Ascending aorta (tissue), 2 donors: ENCODE measurements at regions of chr5 and their contacts with region 1.

Region 1: GRCh38 chr5:1523771-1524480 is at the start of gene LPCAT1:
- DNase-seq: peak; percentile 8 to 86
- H3K4me3 ChIP-seq: peak within 1 kb of the TSS; percentile 82 to 88
- H3K27ac ChIP-seq: peak within 1 kb of the TSS; percentile 89 to 91
- H3K4me1 ChIP-seq: peaks cover 0 to 16% of the 10 kb centered on the region in 2 donors
- H3K27me3 ChIP-seq: no peaks in the 10 kb centered on the region
- CTCF ChIP-seq: peak in 1 of 3 experiments; percentile 18
- total RNA-seq, gene LPCAT1: 86.2 TPM

Region 2: DNA sequence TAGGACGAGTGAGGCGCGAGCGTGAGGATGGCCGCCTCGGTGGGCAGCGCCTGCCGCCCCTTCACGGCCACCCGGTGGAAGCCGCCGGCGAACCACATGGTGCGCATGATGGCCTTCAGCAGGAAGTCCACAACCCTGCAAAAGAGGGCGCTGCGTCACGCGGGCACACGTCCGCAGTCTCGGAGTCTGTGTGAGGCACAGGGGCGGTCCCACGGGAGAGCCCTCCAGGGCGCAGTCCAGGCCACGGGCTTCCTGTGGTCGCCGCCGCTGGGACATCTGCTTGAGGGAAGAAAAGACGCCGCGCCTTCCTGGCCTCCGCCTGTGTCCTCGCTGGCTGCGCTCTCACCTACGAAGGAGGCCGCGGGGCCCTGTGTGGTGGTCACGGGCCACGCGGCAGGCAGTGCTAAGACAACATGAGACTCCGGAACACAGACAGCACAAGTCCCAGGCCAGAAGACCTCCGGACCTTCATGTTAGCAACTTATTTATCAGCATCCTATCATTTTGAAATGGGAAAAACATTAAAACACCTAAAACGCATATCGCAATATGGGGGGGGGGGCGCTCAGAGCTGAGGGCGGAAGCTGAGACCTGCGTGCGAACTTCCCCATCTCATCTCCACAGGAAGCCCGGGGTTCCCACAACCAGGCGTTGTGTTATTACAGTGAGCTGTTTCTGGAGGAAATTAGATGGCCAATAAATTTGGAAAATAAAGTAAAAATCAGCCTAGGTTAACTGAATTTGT is 29.0 kb before region 1 on chr5:
- intact Hi-C with region 1: no loop called
- DNase-seq: no peak
- H3K4me3 ChIP-seq: no peak overlapping the region
- H3K27ac ChIP-seq: no peak overlapping the region
- H3K4me1 ChIP-seq: peaks cover 0 to 2% of the 10 kb centered on the region in 2 donors
- H3K27me3 ChIP-seq: no peaks in the 10 kb centered on the region
- CTCF ChIP-seq: no peak

Region 3: DNA sequence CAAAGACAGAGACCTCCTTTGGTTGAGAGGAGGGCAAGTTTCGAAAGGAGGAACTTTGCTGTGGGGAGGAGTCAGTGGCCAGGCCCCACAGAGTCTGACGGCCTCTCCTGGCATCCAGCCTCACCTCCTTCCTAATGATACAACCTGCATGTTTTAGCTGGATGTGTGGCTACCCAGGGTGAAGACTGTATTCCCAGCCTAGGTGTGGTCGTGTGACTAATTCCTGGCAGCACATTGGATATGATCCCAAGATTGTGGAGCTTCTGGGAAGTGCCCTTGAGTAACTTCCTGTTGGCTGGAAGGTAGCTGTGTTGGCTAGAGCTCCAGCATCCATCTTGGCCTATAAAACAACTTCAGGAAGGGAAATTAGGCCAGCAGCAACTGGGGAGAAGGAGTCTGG is 18.8 kb after region 1 on chr5:
- intact Hi-C with region 1: loop called (anchors 2 kb)
- DNase-seq: peak; percentile 33 to 83
- H3K4me3 ChIP-seq: no peak overlapping the region
- H3K27ac ChIP-seq: peak overlapping the region; percentile 73 to 76
- H3K4me1 ChIP-seq: peaks cover 8 to 10% of the 10 kb centered on the region in 2 donors
- H3K27me3 ChIP-seq: no peaks in the 10 kb centered on the region
- CTCF ChIP-seq: no peak

Region 4: DNA sequence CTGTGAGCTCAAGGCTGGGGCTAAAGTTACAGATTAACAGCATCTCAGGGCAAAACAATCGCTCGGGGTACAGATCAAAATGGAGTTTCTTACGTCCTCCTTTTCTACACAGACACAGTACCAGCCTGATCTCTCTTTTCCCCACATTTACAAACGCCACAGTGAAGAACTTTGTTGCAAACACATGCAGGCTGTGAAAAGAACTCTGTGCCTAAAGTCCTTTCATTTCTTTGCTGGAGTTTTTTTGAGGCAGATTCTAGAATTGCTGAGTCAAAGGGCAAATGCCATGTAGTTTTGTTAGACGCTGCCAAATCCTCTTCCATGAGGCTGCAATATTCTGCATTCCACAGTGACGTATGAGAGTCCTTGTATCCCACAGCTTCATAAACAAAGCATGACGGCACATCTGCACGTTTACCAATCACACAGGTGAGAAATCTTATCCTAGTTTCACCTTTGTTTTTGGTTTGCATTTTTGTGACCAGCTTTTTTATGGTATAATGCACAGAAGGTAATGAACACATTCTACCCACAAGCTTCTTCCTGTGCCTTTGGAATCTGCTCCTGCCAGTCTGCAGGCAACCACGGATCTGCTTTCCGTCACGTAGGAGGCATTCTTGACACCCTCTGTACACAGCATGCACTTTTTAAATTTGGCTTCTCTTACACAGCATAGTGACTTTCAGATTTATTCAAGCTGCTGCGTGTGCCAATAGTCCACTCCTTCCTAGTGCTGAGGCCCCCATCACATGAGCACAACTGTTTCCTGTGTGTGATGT is 44.5 kb after region 1 on chr5:
- intact Hi-C with region 1: loop called (anchors 2 kb)
- DNase-seq: no peak
- H3K4me3 ChIP-seq: no peak overlapping the region
- H3K27ac ChIP-seq: peak overlapping the region; percentile 70 to 75
- H3K4me1 ChIP-seq: peaks cover 8 to 25% of the 10 kb centered on the region in 2 donors
- H3K27me3 ChIP-seq: no peaks in the 10 kb centered on the region
- CTCF ChIP-seq: no peak

Region 5: GRCh38 chr5:1594357-1595106 is 70.6 kb after region 1 on chr5:
- intact Hi-C with region 1: loop called (anchors 2 kb)
- DNase-seq: peak in 1 of 2 donors; percentile 81
- H3K4me3 ChIP-seq: peak overlapping the region; percentile 67 to 71
- H3K27ac ChIP-seq: peak overlapping the region; percentile 78 to 82
- H3K4me1 ChIP-seq: peaks cover 0 to 3% of the 10 kb centered on the region in 2 donors
- H3K27me3 ChIP-seq: no peaks in the 10 kb centered on the region
- CTCF ChIP-seq: peak in 2 of 3 experiments; percentile 41 to 48

Region 6: GRCh38 chr5:1633605-1634336 is 109.8 kb after region 1 on chr5:
- intact Hi-C with region 1: loop called (anchors 5 kb)
- DNase-seq: peak; percentile 30 to 86
- H3K4me3 ChIP-seq: peak overlapping the region; percentile 79 to 87
- H3K27ac ChIP-seq: peak overlapping the region; percentile 90
- H3K4me1 ChIP-seq: peaks cover 0 to 5% of the 10 kb centered on the region in 2 donors
- H3K27me3 ChIP-seq: no peaks in the 10 kb centered on the region
- CTCF ChIP-seq: no peak

Region 7: GRCh38 chr5:1718669-1719068 is 194.7 kb after region 1 on chr5:
- intact Hi-C with region 1: no loop called
- DNase-seq: no peak
- H3K4me3 ChIP-seq: no peak overlapping the region
- H3K27ac ChIP-seq: no peak overlapping the region
- H3K4me1 ChIP-seq: no peaks in the 10 kb centered on the region
- H3K27me3 ChIP-seq: no peaks in the 10 kb centered on the region
- CTCF ChIP-seq: no peak